CD4-positive, alpha-beta memory T cell (primary cell): ENCODE measurements at regions of chr16 and their contacts with region 1.

Region 1: GRCh38 chr16:3611146-3611975 is at the start of gene SLX4:
- DNase-seq: peak; percentile 88 to 97 (median 94)
- H3K4me3 ChIP-seq: peak within 1 kb of the TSS; percentile 89 to 98
- H3K4me3 Mint-ChIP-seq: peak within 1 kb of the TSS; percentile 97 to 100 (median 100)
- H3K27ac ChIP-seq: peak within 1 kb of the TSS; percentile 92
- H3K27ac Mint-ChIP-seq: peak within 1 kb of the TSS; percentile 88 to 100 (median 98)
- H3K4me1 ChIP-seq: peaks cover 34% of the 10 kb centered on the region
- H3K4me1 Mint-ChIP-seq: peaks cover 34 to 56% (median 47%) of the 10 kb centered on the region in 4 donors
- H3K27me3 ChIP-seq: no peaks in the 10 kb centered on the region
- H3K27me3 Mint-ChIP-seq: no peaks in the 10 kb centered on the region
- total RNA-seq, gene SLX4: 5.7 to 6.7 TPM

Region 2: GRCh38 chr16:3443108-3444031 is 168.0 kb before region 1 on chr16 and contains the starts of genes NAA60 and ZNF597:
- CTCF ChIA-PET with region 1: no interaction called
- POLR2A ChIA-PET with region 1: no interaction called
- intact Hi-C with region 1: loop called (anchors 2 kb)
- DNase-seq: peak; percentile 80 to 88 (median 82)
- H3K4me3 ChIP-seq: peak within 1 kb of the TSS; percentile 66 to 67
- H3K4me3 Mint-ChIP-seq: peak within 1 kb of the TSS; percentile 96 to 99 (median 96)
- H3K27ac ChIP-seq: peak within 1 kb of the TSS; percentile 80
- H3K27ac Mint-ChIP-seq: peak within 1 kb of the TSS; percentile 88 to 99 (median 97)
- H3K4me1 ChIP-seq: peaks cover 24% of the 10 kb centered on the region
- H3K4me1 Mint-ChIP-seq: peaks cover 8 to 39% (median 23%) of the 10 kb centered on the region in 4 donors
- H3K27me3 ChIP-seq: no peaks in the 10 kb centered on the region
- H3K27me3 Mint-ChIP-seq: no peaks in the 10 kb centered on the region
- total RNA-seq, gene NAA60: 58.1 to 62.9 TPM
- total RNA-seq, gene ZNF597: 5.3 TPM

Region 3: DNA sequence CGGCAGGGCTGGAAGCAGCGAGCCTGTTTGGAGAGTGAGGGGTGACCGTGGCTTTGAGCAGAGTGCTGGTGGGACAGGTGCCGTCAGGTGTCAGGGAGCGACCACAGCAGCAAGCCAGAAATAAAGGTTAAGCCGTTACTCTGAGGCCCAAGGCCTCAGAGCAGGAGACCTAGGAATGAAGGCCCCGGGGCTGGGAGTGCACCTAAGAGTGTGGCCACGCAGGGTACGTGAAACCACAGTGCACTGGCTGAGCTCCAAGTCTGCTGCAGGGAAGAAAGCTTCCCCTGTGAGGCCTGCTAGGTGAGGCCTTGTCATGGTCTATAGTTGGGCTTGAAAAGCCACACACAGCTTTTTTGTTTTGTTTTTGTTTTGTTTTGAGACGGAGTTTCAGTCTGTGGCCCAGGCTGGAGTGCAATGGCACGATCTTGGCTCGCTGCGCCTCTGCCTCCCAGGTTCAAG is 101.9 kb before region 1 on chr16:
- CTCF ChIA-PET with region 1: no interaction called
- POLR2A ChIA-PET with region 1: interaction called, 3 read pairs
- intact Hi-C with region 1: loop called (anchors 10 kb)
- DNase-seq: peak; percentile 77 to 89 (median 83)
- H3K4me3 ChIP-seq: no peak overlapping the region
- H3K4me3 Mint-ChIP-seq: peak overlapping the region; percentile 12 to 80 (median 56)
- H3K27ac ChIP-seq: peak overlapping the region; percentile 62
- H3K27ac Mint-ChIP-seq: peak overlapping the region; percentile 50 to 98 (median 90)
- H3K4me1 ChIP-seq: peaks cover 59% of the 10 kb centered on the region
- H3K4me1 Mint-ChIP-seq: peaks cover 38 to 67% (median 48%) of the 10 kb centered on the region in 4 donors
- H3K27me3 ChIP-seq: no peaks in the 10 kb centered on the region
- H3K27me3 Mint-ChIP-seq: no peaks in the 10 kb centered on the region

Region 4: GRCh38 chr16:3566990-3567389 is 44.4 kb before region 1 on chr16:
- CTCF ChIA-PET with region 1: no interaction called
- POLR2A ChIA-PET with region 1: no interaction called
- intact Hi-C with region 1: no loop called
- DNase-seq: no peak
- H3K4me3 ChIP-seq: no peak overlapping the region
- H3K4me3 Mint-ChIP-seq: no peak overlapping the region
- H3K27ac ChIP-seq: no peak overlapping the region
- H3K27ac Mint-ChIP-seq: no peak overlapping the region
- H3K4me1 ChIP-seq: no peaks in the 10 kb centered on the region
- H3K4me1 Mint-ChIP-seq: peaks cover 4 to 13% (median 10%) of the 10 kb centered on the region in 4 donors
- H3K27me3 ChIP-seq: no peaks in the 10 kb centered on the region
- H3K27me3 Mint-ChIP-seq: no peaks in the 10 kb centered on the region

Region 5: GRCh38 chr16:3578610-3579551 is 32.5 kb before region 1 on chr16:
- CTCF ChIA-PET with region 1: interaction called, 5 read pairs
- POLR2A ChIA-PET with region 1: interaction called, 32 read pairs
- intact Hi-C with region 1: loop called (anchors 1 kb)
- DNase-seq: peak; percentile 43 to 69 (median 57)
- H3K4me3 ChIP-seq: peak overlapping the region; percentile 47 to 61
- H3K4me3 Mint-ChIP-seq: peak overlapping the region; percentile 94 to 99 (median 98)
- H3K27ac ChIP-seq: peak overlapping the region; percentile 75
- H3K27ac Mint-ChIP-seq: peak overlapping the region; percentile 90 to 98 (median 95)
- H3K4me1 ChIP-seq: peaks cover 45% of the 10 kb centered on the region
- H3K4me1 Mint-ChIP-seq: peaks cover 22 to 65% (median 44%) of the 10 kb centered on the region in 4 donors
- H3K27me3 ChIP-seq: no peaks in the 10 kb centered on the region
- H3K27me3 Mint-ChIP-seq: no peaks in the 10 kb centered on the region

Region 6: DNA sequence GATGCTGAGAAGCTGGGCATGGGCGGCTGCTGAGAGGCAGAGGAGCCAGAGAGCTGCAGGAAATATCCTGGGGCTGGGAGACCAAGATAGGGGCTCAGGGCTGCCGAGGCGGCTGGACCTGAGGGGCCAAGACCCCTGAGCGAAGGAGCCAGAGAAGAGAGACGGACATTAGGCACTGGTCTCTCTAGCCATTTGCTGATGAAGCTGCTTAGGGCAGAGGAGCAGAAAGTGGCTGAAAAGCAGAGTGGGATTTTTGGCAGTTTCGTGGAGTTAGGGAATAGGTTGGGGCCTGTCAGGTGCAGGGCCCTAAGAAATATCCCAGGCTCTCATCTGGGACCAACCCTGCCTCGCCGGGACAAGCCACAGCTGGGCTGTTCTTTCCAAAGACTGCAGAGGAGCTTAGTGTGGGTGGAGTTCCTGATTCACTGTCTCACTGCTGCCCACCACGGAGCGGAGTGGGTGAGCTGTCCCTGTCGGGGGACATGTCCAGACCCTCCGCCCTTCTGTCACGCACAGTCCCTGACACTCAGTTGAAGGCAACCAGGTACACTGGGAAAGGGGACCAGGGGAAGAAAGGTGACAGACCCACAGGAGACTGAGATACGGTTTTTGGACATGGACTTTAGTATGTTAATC is 31.9 kb after region 1 on chr16:
- CTCF ChIA-PET with region 1: no interaction called
- POLR2A ChIA-PET with region 1: no interaction called
- intact Hi-C with region 1: no loop called
- DNase-seq: no peak
- H3K4me3 ChIP-seq: no peak overlapping the region
- H3K4me3 Mint-ChIP-seq: no peak overlapping the region
- H3K27ac ChIP-seq: no peak overlapping the region
- H3K27ac Mint-ChIP-seq: no peak overlapping the region
- H3K4me1 ChIP-seq: no peaks in the 10 kb centered on the region
- H3K4me1 Mint-ChIP-seq: peaks cover 8 to 11% (median 9%) of the 10 kb centered on the region in 4 donors
- H3K27me3 ChIP-seq: no peaks in the 10 kb centered on the region
- H3K27me3 Mint-ChIP-seq: no peaks in the 10 kb centered on the region

Region 7: GRCh38 chr16:4288148-4288921 is 677.0 kb after region 1 on chr16:
- CTCF ChIA-PET with region 1: no interaction called
- POLR2A ChIA-PET with region 1: no interaction called
- intact Hi-C with region 1: no loop called
- DNase-seq: peak; percentile 74 to 79 (median 77)
- H3K4me3 ChIP-seq: no peak overlapping the region
- H3K4me3 Mint-ChIP-seq: peak overlapping the region in 1 of 8 donors; percentile 43
- H3K27ac ChIP-seq: no peak overlapping the region
- H3K27ac Mint-ChIP-seq: peak overlapping the region in 2 of 7 donors; percentile 55 to 57
- H3K4me1 ChIP-seq: peaks cover 7% of the 10 kb centered on the region
- H3K4me1 Mint-ChIP-seq: peaks cover 2 to 18% (median 7%) of the 10 kb centered on the region in 4 donors
- H3K27me3 ChIP-seq: no peaks in the 10 kb centered on the region
- H3K27me3 Mint-ChIP-seq: peaks cover 10 to 18% of the 10 kb centered on the region in 2 donors